ENCODE measurements at regions of chr2 and their contacts with region 1.

Region 1: DNA sequence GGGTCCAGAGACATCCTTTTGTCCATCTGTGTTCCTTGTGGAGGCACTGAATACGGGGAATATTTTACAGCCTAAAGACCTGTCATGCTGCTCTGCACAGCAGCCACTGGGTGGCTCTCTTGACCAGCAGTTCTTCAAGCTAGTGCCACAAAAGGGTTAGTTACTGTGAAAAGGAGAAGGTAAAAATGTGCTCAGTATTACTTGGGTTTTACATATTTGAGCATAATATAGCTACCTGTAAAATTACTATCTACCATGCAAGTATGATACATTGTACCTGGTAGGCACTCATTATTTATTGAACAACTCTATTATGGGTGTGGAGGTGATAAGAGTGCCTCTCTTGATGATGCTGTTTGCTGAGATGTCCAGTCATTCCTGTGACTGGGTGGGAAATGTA is 23.6 kb downstream of the FZD5 start:
- DNase-seq: peak; percentile 83
- H3K4me3 Mint-ChIP-seq: no peak overlapping the region
- H3K27ac Mint-ChIP-seq: no peak overlapping the region
- H3K4me1 Mint-ChIP-seq: no peaks in the 10 kb centered on the region
- H3K27me3 Mint-ChIP-seq: no peaks in the 10 kb centered on the region

Region 2: DNA sequence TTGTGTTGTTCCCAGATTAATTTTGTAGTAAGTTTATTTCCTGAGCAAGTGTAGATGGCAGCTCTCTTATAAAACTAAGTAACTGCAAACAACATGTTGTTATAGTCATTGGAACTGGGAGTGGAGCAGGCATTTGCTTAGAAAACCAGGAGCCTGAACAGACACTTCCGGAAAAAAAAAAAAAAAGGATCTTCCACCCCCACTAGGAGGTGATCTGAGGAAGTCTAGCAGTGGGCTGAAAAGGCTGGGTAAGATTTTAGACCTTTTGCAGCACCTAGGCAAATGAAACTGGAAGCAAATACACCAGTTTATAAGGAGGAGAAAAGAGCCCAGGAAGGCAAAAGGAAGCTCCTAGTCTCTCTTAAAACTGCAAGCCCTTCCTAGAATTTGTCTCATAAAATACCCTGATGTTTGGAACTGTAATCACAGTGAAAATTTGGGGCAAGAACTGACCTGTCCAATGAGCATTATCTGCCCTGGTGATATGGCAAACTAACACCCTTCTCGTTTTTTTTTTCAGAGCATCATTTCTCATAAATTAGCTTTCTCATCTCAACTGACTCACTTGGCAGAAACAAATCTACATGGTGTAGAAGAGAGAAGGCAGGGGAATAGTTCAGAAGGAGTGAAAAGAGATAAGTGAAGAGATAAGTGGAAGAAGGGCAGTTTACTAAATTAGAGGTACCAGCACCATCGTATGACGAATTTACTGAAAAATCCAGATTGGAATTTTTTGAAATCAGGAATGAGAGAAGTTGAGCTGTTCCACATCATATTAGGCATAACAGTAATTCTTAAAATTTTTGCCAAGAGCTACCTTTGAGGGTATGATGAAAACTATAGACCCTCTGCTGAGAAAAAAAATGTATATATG is 39.0 kb before region 1 on chr2:
- intact Hi-C with region 1: no loop called
- DNase-seq: no peak
- H3K4me3 Mint-ChIP-seq: no peak overlapping the region
- H3K27ac Mint-ChIP-seq: no peak overlapping the region
- H3K4me1 Mint-ChIP-seq: peaks cover 12% of the 10 kb centered on the region
- H3K27me3 Mint-ChIP-seq: no peaks in the 10 kb centered on the region

Region 3: GRCh38 chr2:207807516-207807915 is 61.4 kb after region 1 on chr2:
- intact Hi-C with region 1: no loop called
- DNase-seq: no peak
- H3K4me3 Mint-ChIP-seq: no peak overlapping the region
- H3K27ac Mint-ChIP-seq: no peak overlapping the region
- H3K4me1 Mint-ChIP-seq: peaks cover 6% of the 10 kb centered on the region
- H3K27me3 Mint-ChIP-seq: peaks cover 7% of the 10 kb centered on the region

Region 4: DNA sequence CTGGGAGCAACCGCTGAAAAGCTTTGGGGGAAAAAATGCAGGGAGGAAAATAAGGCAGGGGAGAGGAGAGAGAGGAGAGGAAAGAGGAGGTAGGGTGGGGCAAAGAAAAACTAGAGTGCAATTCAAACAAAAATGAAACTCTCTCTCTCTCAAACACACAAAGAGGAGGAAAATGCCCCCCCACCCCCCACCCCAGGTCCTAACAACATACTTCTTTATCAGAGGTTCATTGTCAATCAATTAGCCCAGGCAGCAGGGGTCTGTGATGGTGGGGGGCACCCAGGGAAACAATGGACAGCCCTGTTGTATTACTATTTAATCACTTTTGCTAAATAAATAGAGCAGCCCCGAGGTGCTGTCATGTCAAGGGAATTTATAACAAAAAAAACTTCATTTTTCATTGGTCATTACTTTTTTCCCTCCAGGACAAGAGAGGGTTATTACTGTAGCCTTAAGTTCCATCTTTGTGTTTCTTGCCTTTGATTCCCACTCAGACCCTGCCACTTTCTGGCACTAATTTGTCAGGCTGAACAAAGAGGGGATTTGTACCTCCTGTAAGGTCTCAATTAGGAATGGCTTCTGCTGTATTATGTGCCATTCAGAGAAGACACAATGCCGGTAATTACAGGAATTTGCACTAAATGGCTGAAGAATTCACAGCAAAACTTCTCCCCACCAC is 224.2 kb after region 1 on chr2:
- intact Hi-C with region 1: loop called (anchors 2 kb)
- DNase-seq: no peak
- H3K4me3 Mint-ChIP-seq: no peak overlapping the region
- H3K27ac Mint-ChIP-seq: no peak overlapping the region
- H3K4me1 Mint-ChIP-seq: peaks cover 4% of the 10 kb centered on the region
- H3K27me3 Mint-ChIP-seq: no peaks in the 10 kb centered on the region

Region 5: DNA sequence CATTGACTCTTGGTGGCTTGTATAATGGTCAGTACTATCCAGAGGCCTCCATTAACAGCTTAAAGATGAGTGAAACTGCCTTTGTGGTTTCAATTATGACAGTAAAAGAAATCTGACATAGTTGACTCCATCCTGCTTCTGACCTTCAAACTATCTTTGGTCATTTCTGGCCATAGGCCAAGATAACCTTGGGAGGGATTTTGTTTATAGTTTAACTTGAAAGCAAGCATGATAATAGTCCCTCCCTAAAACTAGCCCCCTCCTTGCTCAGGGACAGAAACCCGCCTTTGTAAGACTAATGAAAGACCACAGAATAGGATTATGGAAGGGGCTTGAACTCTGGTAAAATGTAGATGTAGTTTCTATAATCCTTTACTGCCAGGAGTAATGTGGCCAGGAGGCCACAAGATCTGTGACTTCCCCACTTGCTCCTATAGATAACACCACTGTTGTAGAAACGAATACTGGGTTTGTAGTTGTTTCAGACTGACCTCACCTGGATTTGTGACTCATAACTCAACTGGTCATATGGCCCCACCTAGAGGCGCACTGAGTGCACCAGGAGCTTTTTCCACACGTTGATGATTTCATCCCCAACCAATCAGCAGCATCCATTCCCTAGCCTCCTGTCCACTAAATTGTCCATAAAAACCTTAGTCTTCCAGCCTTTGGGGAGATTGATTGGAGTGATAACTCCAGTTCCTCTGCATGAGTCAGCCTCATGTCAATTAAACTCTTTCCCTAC is 287.8 kb after region 1 on chr2:
- intact Hi-C with region 1: loop called (anchors 1 kb)
- DNase-seq: peak; percentile 72
- H3K4me3 Mint-ChIP-seq: no peak overlapping the region
- H3K27ac Mint-ChIP-seq: no peak overlapping the region
- H3K4me1 Mint-ChIP-seq: peaks cover 3% of the 10 kb centered on the region
- H3K27me3 Mint-ChIP-seq: peaks cover 13% of the 10 kb centered on the region

Region 6: DNA sequence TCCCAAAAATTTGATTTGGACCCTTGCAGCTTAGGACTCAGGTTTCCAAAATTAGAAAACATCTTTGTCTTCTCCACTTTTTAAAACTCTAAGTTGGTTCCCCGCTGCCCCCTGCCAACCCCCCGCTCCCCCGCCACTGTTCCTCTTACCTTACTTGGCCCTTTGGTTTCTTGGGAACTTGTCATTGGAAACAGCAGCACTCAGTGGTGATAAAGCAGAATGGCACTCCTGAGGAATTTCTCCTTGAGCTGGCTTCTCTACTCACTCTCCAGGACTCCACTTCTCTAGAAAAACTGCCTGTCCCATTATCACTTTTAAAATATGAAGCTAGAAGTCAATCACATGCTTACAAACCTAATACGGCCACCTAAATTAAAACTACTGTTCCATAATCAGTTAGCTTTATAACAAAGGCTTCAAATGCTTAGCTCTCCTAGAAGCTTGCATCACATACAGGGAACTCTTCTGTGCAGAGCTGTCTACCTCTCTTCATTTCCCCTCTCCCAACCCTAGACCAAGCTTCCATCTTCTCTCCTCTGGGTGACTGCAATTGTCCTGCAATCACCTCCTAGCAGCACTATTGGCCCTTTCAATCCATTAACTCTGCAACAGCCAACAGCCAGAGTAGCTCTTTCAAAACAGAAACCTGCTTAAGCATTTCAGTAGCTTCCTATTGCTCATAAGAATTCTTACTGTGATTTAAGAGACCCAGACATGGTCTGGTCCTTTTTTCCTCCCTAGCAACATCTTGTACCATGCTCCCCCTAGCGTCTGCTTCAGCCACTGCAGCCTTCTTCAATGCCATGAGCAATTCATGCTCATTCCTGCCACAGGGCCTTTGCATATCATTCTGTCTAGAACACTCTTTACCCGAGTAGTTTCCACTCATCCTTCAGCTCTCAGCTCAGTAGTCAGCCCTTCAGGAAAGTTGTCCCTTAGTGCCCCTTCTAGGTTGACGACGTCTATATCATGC is 294.4 kb after region 1 on chr2:
- intact Hi-C with region 1: loop called (anchors 1 kb)
- DNase-seq: peak; percentile 91
- H3K4me3 Mint-ChIP-seq: no peak overlapping the region
- H3K27ac Mint-ChIP-seq: peak overlapping the region; percentile 34
- H3K4me1 Mint-ChIP-seq: peaks cover 2% of the 10 kb centered on the region
- H3K27me3 Mint-ChIP-seq: peaks cover 17% of the 10 kb centered on the region

Region 7: DNA sequence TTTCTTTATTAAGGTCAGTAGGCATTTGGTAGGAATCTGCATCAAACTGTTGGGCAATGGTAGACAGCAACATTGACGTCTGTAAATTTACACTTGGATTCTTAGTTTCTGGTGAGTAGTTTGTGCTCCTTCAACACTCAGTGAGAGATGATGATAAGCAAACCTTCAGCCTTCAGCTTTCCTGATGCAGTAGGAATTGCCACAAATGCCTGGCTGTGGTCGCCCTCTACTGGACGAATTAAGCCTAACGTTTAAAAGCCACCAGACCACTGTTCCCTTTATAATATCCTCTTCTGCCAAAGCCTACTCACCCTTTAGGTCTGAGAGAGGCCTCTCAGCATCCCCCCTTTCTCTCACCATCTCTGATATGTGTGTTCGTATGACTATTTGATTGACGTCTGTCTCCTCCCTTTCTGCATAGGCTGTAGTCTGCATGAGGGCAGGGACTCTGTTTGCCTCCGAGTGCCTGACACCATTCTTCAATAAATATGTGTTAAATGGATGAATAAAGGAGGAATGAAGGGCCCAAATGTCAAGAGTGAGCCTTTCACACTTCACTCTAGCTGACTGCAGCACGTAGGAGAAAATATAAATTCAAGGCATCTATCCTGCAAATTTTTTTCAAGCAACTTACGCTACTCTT is 326.2 kb after region 1 on chr2:
- intact Hi-C with region 1: loop called (anchors 1 kb)
- DNase-seq: peak; percentile 86
- H3K4me3 Mint-ChIP-seq: no peak overlapping the region
- H3K27ac Mint-ChIP-seq: no peak overlapping the region
- H3K4me1 Mint-ChIP-seq: no peaks in the 10 kb centered on the region
- H3K27me3 Mint-ChIP-seq: peaks cover 6% of the 10 kb centered on the region